ENCODE measurements at regions of chr9 and their contacts with region 1.

Region 1: DNA sequence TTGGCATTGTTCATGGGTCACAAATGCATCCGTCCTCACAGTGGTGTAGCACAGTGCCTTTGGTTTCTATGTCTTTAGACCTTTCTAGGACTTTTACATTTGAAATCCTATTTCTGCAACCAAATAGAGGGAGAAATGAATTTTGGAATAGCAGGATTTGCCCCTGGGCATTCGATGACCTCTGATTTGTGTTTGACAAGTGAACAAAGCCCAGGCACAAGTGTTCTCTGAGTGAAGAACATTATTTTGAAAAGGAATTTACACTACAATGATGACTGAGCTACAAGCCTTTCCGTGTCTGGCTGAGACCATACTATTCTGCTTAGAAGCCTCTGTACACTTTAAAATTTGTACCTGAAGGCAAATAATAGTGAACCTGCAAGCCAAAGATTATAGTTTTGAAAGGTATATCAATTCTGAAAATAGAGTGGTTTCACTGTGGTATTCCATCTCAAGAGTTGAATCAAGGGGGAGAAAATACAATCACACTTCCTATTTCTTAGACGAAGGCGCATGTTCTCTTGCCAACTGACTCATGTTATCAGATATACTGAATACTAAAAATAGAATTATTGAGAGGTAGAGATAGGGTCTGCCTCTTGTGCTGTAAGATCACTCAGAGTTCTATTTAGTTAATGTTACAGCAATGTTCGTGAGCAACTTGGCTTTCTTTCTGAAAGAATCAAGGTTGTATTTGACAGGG is 297.6 kb downstream of the KDM4C start:
- DNase-seq: no peak
- ATAC-seq: no peak
- H3K4me3 ChIP-seq: no peak overlapping the region
- H3K27ac ChIP-seq: no peak overlapping the region
- H3K4me1 ChIP-seq: peaks cover 3% of the 10 kb centered on the region
- H3K27me3 ChIP-seq: no peaks in the 10 kb centered on the region
- CTCF ChIP-seq: no peak
- POLR2A ChIP-seq: no peak
- RAD21 ChIP-seq: no peak

Region 2: GRCh38 chr9:6645355-6646292 is 409.7 kb before region 1 on chr9 and contains the start of gene GLDC:
- CTCF ChIA-PET with region 1: no interaction called
- POLR2A ChIA-PET with region 1: no interaction called
- dilution Hi-C with region 1: no loop called
- in situ Hi-C with region 1: no loop called
- intact Hi-C with region 1: no loop called
- DNase-seq: no peak
- ATAC-seq: peak; percentile 52
- H3K4me3 ChIP-seq: peak within 1 kb of the TSS; percentile 16; the same call in 1 of the 2 replicates
- H3K27ac ChIP-seq: no peak within 1 kb of the TSS
- H3K4me1 ChIP-seq: no peaks in the 10 kb centered on the region; the same call in 1 of the 2 replicates
- H3K27me3 ChIP-seq: peaks cover 56% of the 10 kb centered on the region
- CTCF ChIP-seq: no peak
- POLR2A ChIP-seq: no peak
- RAD21 ChIP-seq: no peak
- total RNA-seq, gene GLDC: 0.36 and 0.83 TPM in 2 replicates

Region 3: DNA sequence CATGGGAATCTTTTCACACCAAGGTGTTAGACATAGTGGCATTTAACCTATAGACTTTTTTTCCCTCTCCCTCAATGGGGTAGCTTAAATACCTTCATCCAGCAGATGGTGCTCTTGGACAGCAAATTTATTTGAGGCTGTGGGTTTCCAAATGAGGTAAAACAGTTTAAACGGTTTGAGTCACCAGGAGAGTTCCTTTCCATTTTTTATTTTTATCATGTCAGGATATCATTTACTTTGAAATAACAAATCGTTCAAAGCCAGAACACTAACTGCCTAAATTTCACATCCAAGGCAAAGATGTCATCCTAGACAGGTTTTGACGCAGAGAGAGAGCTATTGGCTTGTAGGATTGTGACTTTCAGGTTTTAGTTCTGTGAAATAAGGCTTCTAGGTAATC is 227.9 kb before region 1 on chr9:
- CTCF ChIA-PET with region 1: interaction called, 4 read pairs
- POLR2A ChIA-PET with region 1: no interaction called
- dilution Hi-C with region 1: no loop called
- in situ Hi-C with region 1: no loop called
- intact Hi-C with region 1: loop called (anchors 5 kb)
- DNase-seq: peak; percentile 54
- ATAC-seq: peak; percentile 86
- H3K4me3 ChIP-seq: no peak overlapping the region
- H3K27ac ChIP-seq: no peak overlapping the region
- H3K4me1 ChIP-seq: no peaks in the 10 kb centered on the region
- H3K27me3 ChIP-seq: no peaks in the 10 kb centered on the region
- CTCF ChIP-seq: peak; percentile 76
- POLR2A ChIP-seq: no peak
- RAD21 ChIP-seq: peak; percentile 74

Region 4: DNA sequence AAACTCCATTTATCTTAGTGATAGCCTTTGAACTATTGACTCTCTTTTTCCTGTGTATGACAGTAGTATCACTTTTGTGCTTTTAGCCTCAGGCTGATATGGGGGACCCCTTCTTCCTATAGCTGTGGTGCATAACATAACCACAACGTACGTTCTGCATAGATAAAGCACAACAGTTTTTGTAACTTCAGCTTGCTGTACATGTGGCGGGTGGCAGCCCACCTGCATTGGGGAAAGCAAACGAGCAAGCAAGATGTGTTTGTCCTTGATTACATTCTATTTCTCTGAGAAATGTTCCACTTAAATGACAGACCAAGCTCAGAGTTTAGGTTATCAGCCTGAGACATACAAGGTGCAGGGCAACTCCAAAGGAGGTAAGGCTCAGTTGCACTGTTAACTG is 11.8 kb after region 1 on chr9:
- CTCF ChIA-PET with region 1: interaction called, 10 read pairs
- POLR2A ChIA-PET with region 1: no interaction called
- dilution Hi-C with region 1: no loop called
- in situ Hi-C with region 1: no loop called
- intact Hi-C with region 1: no loop called
- DNase-seq: no peak
- ATAC-seq: no peak
- H3K4me3 ChIP-seq: no peak overlapping the region
- H3K27ac ChIP-seq: no peak overlapping the region
- H3K4me1 ChIP-seq: no peaks in the 10 kb centered on the region
- H3K27me3 ChIP-seq: no peaks in the 10 kb centered on the region
- CTCF ChIP-seq: no peak
- POLR2A ChIP-seq: no peak
- RAD21 ChIP-seq: no peak

Region 5: DNA sequence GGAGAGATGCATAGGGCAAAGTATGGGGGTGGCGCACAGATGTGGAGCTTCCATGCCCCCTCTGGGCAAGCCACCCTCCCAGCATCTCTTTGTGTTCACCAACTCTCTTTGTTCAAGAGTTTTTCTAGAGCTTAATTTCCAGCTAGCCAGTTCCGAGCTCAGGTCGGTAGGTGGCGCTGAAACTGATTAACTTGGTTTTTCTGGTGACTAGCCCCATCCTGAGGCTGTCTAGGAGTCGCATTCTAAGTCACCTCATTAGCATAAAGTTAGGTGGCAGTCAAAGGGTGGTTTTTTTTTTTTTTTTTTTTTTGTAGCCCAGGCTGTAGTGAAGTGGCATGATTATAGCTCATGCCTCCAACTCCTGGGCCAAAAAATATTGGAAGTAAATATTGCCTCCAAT is 178.8 kb after region 1 on chr9:
- CTCF ChIA-PET with region 1: interaction called, 4 read pairs
- POLR2A ChIA-PET with region 1: no interaction called
- dilution Hi-C with region 1: no loop called
- in situ Hi-C with region 1: no loop called
- intact Hi-C with region 1: loop called (anchors 5 kb)
- DNase-seq: peak; percentile 22
- ATAC-seq: peak; percentile 64
- H3K4me3 ChIP-seq: no peak overlapping the region
- H3K27ac ChIP-seq: no peak overlapping the region
- H3K4me1 ChIP-seq: no peaks in the 10 kb centered on the region
- H3K27me3 ChIP-seq: peaks cover 3% of the 10 kb centered on the region; the same call in 1 of the 2 replicates
- CTCF ChIP-seq: peak; percentile 61
- POLR2A ChIP-seq: no peak
- RAD21 ChIP-seq: peak; percentile 38

Region 6: GRCh38 chr9:7387840-7388239 is 332.5 kb after region 1 on chr9:
- CTCF ChIA-PET with region 1: no interaction called
- POLR2A ChIA-PET with region 1: no interaction called
- dilution Hi-C with region 1: no loop called
- in situ Hi-C with region 1: no loop called
- intact Hi-C with region 1: no loop called
- DNase-seq: no peak
- ATAC-seq: no peak
- H3K4me3 ChIP-seq: no peak overlapping the region
- H3K27ac ChIP-seq: no peak overlapping the region
- H3K4me1 ChIP-seq: no peaks in the 10 kb centered on the region
- H3K27me3 ChIP-seq: no peaks in the 10 kb centered on the region
- CTCF ChIP-seq: no peak
- POLR2A ChIP-seq: no peak
- RAD21 ChIP-seq: no peak

Region 7: GRCh38 chr9:7405924-7406604 is 350.7 kb after region 1 on chr9:
- CTCF ChIA-PET with region 1: no interaction called
- POLR2A ChIA-PET with region 1: no interaction called
- dilution Hi-C with region 1: no loop called
- in situ Hi-C with region 1: no loop called
- intact Hi-C with region 1: loop called (anchors 10 kb)
- DNase-seq: no peak
- ATAC-seq: no peak
- H3K4me3 ChIP-seq: no peak overlapping the region
- H3K27ac ChIP-seq: no peak overlapping the region
- H3K4me1 ChIP-seq: peaks cover 3% of the 10 kb centered on the region; the same call in 1 of the 2 replicates
- H3K27me3 ChIP-seq: no peaks in the 10 kb centered on the region
- CTCF ChIP-seq: no peak
- POLR2A ChIP-seq: no peak
- RAD21 ChIP-seq: no peak

Region 8: GRCh38 chr9:7799234-7799943 is 744.0 kb after region 1 on chr9 and contains the start of gene DMAC1:
- CTCF ChIA-PET with region 1: no interaction called
- POLR2A ChIA-PET with region 1: no interaction called
- dilution Hi-C with region 1: no loop called
- in situ Hi-C with region 1: no loop called
- intact Hi-C with region 1: loop called (anchors 10 kb)
- DNase-seq: peak; percentile 84
- ATAC-seq: peak; percentile 99
- H3K4me3 ChIP-seq: peak within 1 kb of the TSS; percentile 79
- H3K27ac ChIP-seq: peak within 1 kb of the TSS; percentile 78
- H3K4me1 ChIP-seq: peaks cover 4% of the 10 kb centered on the region; the same call in 1 of the 2 replicates
- H3K27me3 ChIP-seq: no peaks in the 10 kb centered on the region
- CTCF ChIP-seq: no peak
- POLR2A ChIP-seq: peak; percentile 53; the same call in 1 of the 2 replicates
- RAD21 ChIP-seq: no peak
- total RNA-seq, gene DMAC1: 8.1 and 9.4 TPM in 2 replicates

Measured in IMR-90 (cell line).